Calu3 (cell line): ENCODE measurements at regions of chr5 and their contacts with region 1.

Region 1: DNA sequence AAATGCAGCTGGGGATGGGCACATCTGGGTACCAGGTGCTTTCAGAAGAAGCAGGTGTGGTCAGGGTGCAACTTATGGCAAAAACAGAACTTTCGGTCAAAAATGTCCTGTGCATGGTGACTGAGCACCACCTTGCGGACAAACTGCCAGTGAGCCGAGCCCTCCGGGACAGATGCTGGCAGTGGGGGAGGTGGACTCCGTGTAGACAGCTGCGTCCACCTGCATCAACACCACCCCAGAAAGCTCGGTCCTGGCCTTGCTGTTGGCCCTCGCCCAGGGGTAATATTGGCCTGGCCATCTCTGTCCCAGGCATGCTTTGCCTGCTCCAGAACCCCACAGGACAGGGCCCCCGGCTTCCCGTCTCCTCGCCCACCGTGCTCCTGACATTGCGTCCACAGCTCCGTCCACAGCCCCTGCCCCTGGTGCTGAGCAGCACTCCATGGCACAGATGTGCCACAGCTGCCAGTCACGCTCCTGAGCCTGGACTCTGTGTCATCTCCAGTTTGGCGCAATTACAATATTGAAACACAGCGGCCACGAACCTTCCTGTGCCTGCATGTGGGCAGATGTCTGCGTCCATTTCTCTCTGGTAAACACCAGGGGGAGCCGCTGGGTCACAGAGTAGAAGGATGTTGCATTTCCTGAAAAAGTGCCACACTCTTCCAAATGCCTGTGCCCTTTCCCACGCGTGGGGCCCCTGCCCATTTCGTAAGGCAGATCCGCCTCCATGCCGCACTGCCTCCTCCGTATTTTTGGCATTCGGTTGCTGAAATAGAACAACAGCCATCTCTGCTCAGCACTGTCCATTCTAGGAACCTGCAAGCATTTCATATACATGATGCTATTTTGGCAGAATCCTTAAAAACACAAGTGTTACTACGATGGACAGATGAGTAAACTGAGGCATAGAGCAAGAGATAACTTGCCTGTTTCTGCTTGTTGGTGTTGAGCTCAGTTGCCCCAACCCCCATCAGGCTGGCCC is 33.4 kb upstream of the SLC6A19 start:
- DNase-seq: peak; percentile 84
- H3K4me3 Mint-ChIP-seq: peak overlapping the region; percentile 70
- H3K27ac Mint-ChIP-seq: peak overlapping the region; percentile 20
- H3K4me1 Mint-ChIP-seq: peaks cover 21% of the 10 kb centered on the region
- H3K27me3 Mint-ChIP-seq: peaks cover 48% of the 10 kb centered on the region
- CTCF ChIP-seq: peak; percentile 84

Region 2: DNA sequence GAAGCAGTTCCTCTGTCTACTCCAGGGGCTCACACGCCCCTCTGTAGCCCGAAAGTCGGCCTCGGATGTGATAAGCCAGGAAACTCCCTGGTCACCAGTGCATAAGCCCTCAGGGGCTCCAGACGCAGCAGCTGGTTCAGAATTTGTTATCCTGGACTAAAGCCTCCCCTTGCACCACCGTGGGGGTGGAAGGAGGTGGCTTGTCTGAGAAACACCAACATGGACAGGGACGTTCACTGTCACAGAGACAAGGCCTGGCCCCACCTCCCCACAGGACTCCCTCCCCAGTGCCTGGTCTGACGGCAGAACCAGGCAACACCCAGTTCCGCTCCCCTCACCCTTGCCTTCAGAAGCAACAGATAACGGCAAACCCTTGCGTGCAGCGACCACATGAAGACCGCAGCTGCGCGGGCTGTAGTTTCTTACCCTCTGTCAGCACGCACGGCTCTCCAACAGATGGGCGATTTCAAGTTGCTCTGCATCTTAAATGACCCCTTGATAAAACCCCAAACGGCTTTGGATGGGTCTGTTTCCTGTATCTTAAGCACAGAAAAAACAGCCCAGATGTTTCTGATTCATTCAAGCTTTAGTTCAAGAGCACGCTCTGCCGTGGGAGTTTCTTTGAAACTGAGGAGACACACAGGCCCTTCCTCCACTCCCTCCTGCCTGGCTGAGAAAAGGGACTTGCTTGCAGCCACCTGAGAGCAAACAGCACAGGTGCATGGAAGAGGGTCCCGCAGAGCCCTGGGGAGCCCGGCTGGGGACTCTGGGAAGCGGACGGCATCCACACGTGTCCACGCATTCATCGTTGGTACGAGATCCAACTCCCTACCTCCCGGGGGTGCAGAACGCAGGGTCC is 204.1 kb before region 1 on chr5:
- CTCF ChIA-PET with region 1: no interaction called
- intact Hi-C with region 1: no loop called
- DNase-seq: no peak
- H3K4me3 Mint-ChIP-seq: no peak overlapping the region
- H3K27ac Mint-ChIP-seq: no peak overlapping the region
- H3K4me1 Mint-ChIP-seq: peaks cover 12% of the 10 kb centered on the region
- H3K27me3 Mint-ChIP-seq: peaks cover 97% of the 10 kb centered on the region
- CTCF ChIP-seq: no peak

Region 3: DNA sequence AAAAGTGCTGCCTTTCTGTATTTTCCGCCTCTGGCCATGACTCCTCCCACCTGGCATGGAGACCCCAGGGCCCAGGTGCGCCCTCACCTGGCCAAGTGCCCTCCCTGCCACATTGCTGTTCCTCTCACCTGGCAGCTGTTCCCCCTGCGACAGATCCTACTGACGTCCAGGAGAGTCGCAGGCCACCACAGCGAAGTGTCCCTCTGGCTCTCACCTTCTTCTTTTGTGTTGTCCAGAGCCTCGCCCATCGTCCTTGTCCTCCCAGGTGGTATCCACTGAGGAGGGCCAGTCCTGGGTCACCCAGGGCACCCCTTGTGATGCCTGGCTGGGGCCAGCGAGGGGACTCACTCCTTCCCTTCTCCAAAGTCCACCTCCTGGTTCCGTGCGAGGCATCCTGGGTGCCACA is 156.8 kb before region 1 on chr5:
- CTCF ChIA-PET with region 1: no interaction called
- intact Hi-C with region 1: loop called (anchors 5 kb)
- DNase-seq: peak; percentile 79
- H3K4me3 Mint-ChIP-seq: no peak overlapping the region
- H3K27ac Mint-ChIP-seq: no peak overlapping the region
- H3K4me1 Mint-ChIP-seq: peaks cover 17% of the 10 kb centered on the region
- H3K27me3 Mint-ChIP-seq: peaks cover 72% of the 10 kb centered on the region
- CTCF ChIP-seq: peak; percentile 54

Region 4: DNA sequence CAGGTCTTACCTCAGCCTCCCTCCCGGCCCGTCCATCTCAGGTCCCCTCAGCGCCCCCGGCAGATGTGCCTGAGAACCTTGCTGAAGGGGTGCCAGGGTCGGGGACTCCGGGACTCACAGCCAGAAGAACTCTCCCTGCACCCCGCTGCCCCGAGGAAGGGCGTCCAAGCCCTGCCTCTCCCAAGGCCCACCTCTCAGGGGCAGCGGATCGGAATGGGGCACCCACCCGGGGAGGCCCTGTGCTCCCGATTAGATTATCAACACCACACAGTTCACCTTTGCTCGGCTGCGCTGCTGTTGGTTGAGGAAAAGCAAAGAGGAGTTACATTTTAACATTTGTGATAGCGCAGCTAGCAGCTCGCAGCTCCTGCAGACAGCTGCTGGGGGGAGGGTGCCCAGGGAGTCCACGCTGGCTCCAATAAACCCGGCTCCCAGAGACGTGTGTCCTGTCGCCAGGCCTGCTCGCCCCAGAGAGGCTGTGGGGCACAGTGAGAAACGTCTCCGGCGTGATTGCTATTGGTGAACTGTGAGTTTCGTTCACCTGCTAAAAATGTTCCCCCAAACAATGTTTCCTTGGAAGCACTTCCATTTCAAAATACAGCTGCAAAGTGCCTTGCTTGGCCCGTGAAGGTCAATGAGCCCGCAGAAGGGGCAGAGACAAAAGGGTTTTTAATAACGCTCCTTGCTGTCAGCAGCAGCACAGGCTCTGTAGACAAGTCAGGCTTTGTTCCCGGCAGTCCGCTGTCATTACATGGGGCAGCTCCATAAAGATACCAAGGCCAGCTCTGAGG is 14.8 kb after region 1 on chr5:
- CTCF ChIA-PET with region 1: no interaction called
- intact Hi-C with region 1: no loop called
- DNase-seq: peak; percentile 27
- H3K4me3 Mint-ChIP-seq: no peak overlapping the region
- H3K27ac Mint-ChIP-seq: no peak overlapping the region
- H3K4me1 Mint-ChIP-seq: peaks cover 11% of the 10 kb centered on the region
- H3K27me3 Mint-ChIP-seq: peaks cover 26% of the 10 kb centered on the region
- CTCF ChIP-seq: no peak